ENCODE measurements at regions of chr10 and their contacts with region 1.

Region 1: GRCh38 chr10:70115948-70116682 is 16.5 kb downstream of the AIFM2 start:
- DNase-seq: peak; percentile 35
- H3K4me3 ChIP-seq: no peak overlapping the region
- H3K27ac ChIP-seq: no peak overlapping the region
- H3K4me1 ChIP-seq: peaks cover 6% of the 10 kb centered on the region
- H3K27me3 ChIP-seq: no peaks in the 10 kb centered on the region
- CTCF ChIP-seq: peak; percentile 85 to 95
- POLR2A ChIP-seq: no peak

Region 2: DNA sequence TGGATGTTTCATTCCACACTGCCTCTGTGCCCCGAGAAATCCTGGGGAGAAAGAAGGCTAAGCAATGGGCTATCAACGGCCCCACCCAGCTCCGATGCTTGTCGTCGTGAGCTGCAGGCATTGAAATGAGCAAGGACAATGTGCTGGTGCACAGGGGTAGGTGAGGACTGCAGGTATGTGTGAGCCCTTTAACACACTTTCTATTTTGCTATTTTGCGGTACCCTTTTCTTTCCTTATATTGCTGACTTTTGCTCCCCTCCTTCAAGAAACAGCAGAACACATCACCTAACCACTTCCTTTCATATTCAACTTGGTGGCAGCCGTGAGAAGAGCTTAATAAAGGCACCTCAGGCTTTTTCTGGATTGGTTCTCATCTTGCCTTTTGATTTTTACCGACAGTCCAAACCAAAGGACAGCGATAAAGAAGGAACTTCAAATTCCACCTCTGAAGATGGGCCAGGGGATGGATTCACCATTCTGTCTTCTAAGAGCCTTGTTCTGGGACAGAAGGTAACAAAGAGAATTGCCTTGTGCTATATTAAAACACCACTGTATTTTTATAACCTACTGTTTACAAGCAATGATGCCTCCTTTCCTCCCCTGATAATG is 22.7 kb before region 1 on chr10:
- CTCF ChIA-PET with region 1: interaction called, 30 read pairs
- POLR2A ChIA-PET with region 1: no interaction called
- dilution Hi-C with region 1: no loop called
- intact Hi-C with region 1: no loop called
- DNase-seq: no peak
- H3K4me3 ChIP-seq: no peak overlapping the region
- H3K27ac ChIP-seq: no peak overlapping the region
- H3K4me1 ChIP-seq: no peaks in the 10 kb centered on the region
- H3K27me3 ChIP-seq: peaks cover 12 to 40% of the 10 kb centered on the region in 2 experiments
- CTCF ChIP-seq: no peak
- POLR2A ChIP-seq: no peak

Region 3: DNA sequence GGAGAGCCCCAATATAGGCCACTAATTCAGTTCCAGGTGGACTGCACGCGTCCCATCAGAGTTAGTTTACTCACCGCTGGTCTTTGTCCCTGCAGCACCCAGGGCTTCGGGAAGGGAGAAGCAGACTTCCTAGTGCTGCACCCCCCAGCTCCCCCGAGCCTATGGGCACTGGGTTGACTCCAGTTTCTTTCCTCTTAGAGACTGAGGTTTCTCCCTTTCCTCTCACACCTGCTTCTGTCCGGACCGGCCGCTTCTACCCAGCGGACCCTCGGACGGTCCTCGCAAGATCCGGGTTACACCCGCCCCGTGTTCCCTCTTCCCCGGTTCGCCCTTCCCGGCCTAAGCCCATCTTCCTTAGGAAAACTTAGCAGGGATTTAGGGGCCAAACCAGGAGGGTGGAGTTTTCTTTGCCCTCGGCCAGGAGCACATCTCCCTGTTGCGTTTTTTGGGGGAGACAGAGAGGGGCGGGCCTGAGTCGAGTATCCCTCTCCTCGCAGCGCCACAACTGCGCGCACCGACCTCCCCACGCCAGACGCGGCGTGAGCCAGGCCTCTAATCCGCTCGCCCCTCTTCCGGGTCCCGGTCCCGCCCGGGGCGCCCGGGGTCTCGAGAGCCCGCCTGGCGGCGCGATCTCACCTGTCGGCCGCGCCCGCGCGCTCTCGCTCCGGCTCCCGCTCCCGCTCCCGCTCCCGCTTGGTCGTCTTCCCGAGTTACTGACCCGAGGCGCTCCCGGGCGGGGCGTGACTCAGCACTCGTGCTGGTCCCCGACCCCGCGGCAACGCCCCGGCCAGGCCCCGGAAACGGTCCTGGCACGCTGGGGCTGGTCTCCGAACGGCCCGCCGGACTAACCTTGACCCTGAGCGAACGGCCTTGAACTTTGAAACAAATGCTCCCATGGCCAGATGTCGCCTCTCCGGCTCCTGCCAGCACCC is 16.2 kb after region 1 on chr10 and contains the start of gene AIFM2:
- CTCF ChIA-PET with region 1: interaction called, 20 read pairs
- POLR2A ChIA-PET with region 1: no interaction called
- dilution Hi-C with region 1: no loop called
- intact Hi-C with region 1: no loop called
- DNase-seq: peak; percentile 38
- H3K4me3 ChIP-seq: peak within 1 kb of the TSS; percentile 58 to 77 (median 75)
- H3K27ac ChIP-seq: peak within 1 kb of the TSS; percentile 60
- H3K4me1 ChIP-seq: peaks cover 13% of the 10 kb centered on the region
- H3K27me3 ChIP-seq: no peaks in the 10 kb centered on the region
- CTCF ChIP-seq: no peak
- POLR2A ChIP-seq: no peak
- total RNA-seq, gene AIFM2: 6.6 and 8.7 TPM in 2 replicates

Region 4: GRCh38 chr10:70137927-70138883 is 22.1 kb after region 1 on chr10:
- CTCF ChIA-PET with region 1: interaction called, 35 read pairs
- POLR2A ChIA-PET with region 1: interaction called, 7 read pairs
- dilution Hi-C with region 1: no loop called
- intact Hi-C with region 1: no loop called
- DNase-seq: no peak
- H3K4me3 ChIP-seq: no peak overlapping the region
- H3K27ac ChIP-seq: no peak overlapping the region
- H3K4me1 ChIP-seq: peaks cover under 1% of the 10 kb centered on the region
- H3K27me3 ChIP-seq: no peaks in the 10 kb centered on the region
- CTCF ChIP-seq: no peak
- POLR2A ChIP-seq: no peak